ENCODE measurements at regions of chr10 and their contacts with region 1.

Region 1: GRCh38 chr10:69004821-69005220 is 16.2 kb downstream of the KIFBP start:
- DNase-seq: no peak
- H3K4me3 Mint-ChIP-seq: no peak overlapping the region
- H3K27ac Mint-ChIP-seq: no peak overlapping the region
- H3K4me1 Mint-ChIP-seq: peaks cover 6% of the 10 kb centered on the region
- H3K27me3 Mint-ChIP-seq: no peaks in the 10 kb centered on the region

Region 2: DNA sequence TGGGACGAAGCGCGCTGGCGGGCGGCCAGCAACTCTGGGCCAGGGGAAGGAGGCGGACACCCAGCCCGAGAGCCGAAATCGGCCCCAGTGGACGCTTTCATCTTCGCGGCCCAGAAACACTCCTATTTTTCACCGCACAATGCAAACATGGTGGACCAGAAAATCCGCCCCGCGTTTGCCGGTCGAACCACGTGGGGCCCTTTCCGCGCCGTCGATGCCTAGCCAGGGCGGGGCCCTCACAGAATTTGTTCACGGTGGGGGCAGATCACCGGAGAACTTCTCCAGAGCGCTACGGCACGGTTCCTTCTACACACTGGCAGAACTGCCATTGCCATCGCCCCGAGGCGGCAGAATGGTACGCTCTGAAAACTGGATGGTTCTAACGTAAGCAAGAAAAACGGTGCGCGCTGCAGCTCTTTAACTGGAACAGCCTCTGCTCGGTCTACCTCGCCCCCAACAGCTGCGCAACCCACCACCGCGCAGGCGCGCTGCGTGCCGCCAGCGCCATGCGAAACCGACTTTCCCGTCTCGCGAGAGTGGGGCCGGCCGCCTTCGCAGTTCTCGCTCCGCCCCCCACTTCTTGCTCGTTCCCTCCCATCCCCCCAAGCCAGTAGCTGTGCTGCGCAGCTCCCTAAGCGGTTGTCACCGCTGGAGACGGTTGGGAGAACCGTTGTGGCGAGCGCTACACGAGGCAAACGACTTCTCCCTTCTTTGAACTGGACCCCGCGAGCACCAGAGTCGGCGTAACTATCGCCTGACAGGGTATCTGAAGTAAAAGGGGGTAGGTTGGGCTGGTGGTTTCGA is 673.2 kb before region 1 on chr10 and contains the start of gene HNRNPH3:
- CTCF ChIA-PET with region 1: no interaction called
- intact Hi-C with region 1: no loop called
- DNase-seq: peak; percentile 99
- H3K4me3 Mint-ChIP-seq: peak within 1 kb of the TSS; percentile 100
- H3K27ac Mint-ChIP-seq: peak within 1 kb of the TSS; percentile 100
- H3K4me1 Mint-ChIP-seq: peaks cover 40% of the 10 kb centered on the region
- H3K27me3 Mint-ChIP-seq: no peaks in the 10 kb centered on the region
- total RNA-seq, gene HNRNPH3: 145 to 150 TPM

Region 3: GRCh38 chr10:69045441-69046300 is 40.9 kb after region 1 on chr10:
- CTCF ChIA-PET with region 1: interaction called, 11 read pairs
- intact Hi-C with region 1: loop called (anchors 2 kb)
- DNase-seq: peak; percentile 60
- H3K4me3 Mint-ChIP-seq: no peak overlapping the region
- H3K27ac Mint-ChIP-seq: peak overlapping the region; percentile 87
- H3K4me1 Mint-ChIP-seq: peaks cover 29% of the 10 kb centered on the region
- H3K27me3 Mint-ChIP-seq: no peaks in the 10 kb centered on the region

Region 4: GRCh38 chr10:69065406-69066361 is 60.9 kb after region 1 on chr10:
- CTCF ChIA-PET with region 1: interaction called, 15 read pairs
- intact Hi-C with region 1: no loop called
- DNase-seq: peak; percentile 67
- H3K4me3 Mint-ChIP-seq: peak overlapping the region; percentile 19
- H3K27ac Mint-ChIP-seq: peak overlapping the region; percentile 93
- H3K4me1 Mint-ChIP-seq: peaks cover 39% of the 10 kb centered on the region
- H3K27me3 Mint-ChIP-seq: no peaks in the 10 kb centered on the region

Region 5: DNA sequence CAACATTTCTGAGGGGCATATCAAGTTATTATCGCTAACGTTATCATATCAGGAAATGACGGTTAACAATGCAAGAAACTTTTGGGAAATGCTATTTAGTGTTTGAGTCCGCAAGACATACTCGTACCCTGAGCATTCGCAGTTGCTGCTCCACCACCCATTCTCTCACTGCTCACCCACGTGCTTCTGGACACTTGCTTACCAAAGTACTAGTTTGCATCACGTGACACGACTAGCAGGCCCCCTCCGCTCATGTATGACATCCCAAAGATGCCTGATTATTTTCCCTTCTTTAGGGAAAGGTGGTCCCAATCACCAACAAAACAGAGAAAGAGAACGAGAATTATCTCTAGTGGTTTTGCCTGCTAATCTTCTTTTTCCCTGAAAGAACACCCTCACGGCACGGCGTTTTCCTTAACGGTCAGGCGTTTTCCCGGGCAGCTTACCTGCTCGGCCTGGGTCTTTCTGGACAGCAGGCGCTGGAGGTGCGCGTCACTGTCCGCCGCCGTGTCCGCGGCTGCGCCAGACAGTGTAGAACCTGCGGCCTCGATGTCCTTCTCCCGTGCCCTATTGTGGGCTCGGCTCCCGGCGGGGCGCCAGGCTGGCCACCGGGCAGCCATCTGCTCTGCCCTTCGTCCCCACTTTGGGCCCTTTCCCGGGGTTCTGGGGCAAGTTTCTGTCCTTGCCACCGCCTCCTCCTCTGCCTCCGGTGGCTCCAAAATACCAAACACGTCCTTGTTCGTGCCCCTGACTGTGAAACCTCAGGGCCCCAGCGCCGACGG is 175.1 kb after region 1 on chr10 and contains the start of gene SUPV3L1:
- CTCF ChIA-PET with region 1: no interaction called
- intact Hi-C with region 1: loop called (anchors 2 kb)
- DNase-seq: peak; percentile 92
- H3K4me3 Mint-ChIP-seq: peak within 1 kb of the TSS; percentile 92
- H3K27ac Mint-ChIP-seq: peak within 1 kb of the TSS; percentile 98
- H3K4me1 Mint-ChIP-seq: peaks cover 32% of the 10 kb centered on the region
- H3K27me3 Mint-ChIP-seq: no peaks in the 10 kb centered on the region
- total RNA-seq, gene SUPV3L1: 38.4 to 41.1 TPM

Region 6: GRCh38 chr10:69392481-69393000 is 387.7 kb after region 1 on chr10:
- CTCF ChIA-PET with region 1: interaction called, 4 read pairs
- intact Hi-C with region 1: loop called (anchors 1 kb)
- DNase-seq: peak; percentile 92
- H3K4me3 Mint-ChIP-seq: no peak overlapping the region
- H3K27ac Mint-ChIP-seq: peak overlapping the region; percentile 76
- H3K4me1 Mint-ChIP-seq: peaks cover 23% of the 10 kb centered on the region
- H3K27me3 Mint-ChIP-seq: no peaks in the 10 kb centered on the region